Dorsolateral prefrontal cortex (tissue), 120 donors: ENCODE measurements at regions of chr5 and their contacts with region 1.

Region 1: DNA sequence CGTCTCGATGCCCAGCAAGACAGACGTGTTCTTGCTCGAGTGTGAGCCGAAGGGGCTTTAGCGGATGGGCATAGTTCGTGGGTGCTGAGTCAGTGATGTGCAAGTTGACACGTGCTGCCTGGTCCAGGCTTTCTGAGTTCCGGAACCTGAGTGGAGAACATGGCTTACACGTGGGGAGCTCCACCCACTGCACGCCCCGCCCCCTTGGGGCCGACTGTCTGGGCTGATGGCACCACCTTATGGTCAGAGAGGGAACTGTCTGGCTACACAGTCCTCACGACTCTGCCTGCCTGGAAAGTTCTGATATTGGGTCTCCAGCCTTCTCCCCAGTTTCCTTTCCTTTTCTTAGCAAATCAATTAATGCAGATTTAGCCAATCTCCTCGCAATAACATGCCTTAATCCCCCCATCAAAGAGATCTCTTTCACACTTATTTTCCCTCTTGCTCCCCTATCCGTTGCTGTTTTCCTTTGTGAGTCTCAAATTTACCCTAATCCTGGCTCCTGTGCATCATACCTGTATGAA is 3.8 kb upstream of the STC2 start:
- DNase-seq: peak in 9 of 10 donors; percentile 67 to 84 (median 73)
- H3K4me3 ChIP-seq: no peak overlapping the region
- H3K27ac ChIP-seq: no peak overlapping the region
- H3K27me3 ChIP-seq: peaks cover 0 to 47% (median 30%) of the 10 kb centered on the region in 45 donors
- CTCF ChIP-seq: peak; percentile 49 to 95 (median 87)

Region 2: GRCh38 chr5:173412566-173412965 is 80.5 kb after region 1 on chr5:
- intact Hi-C with region 1: loop called in 1 of 2 experiments (anchors 5 kb)
- DNase-seq: peak in 4 of 10 donors; percentile 20 to 58 (median 53)
- H3K4me3 ChIP-seq: no peak overlapping the region
- H3K27ac ChIP-seq: no peak overlapping the region
- H3K27me3 ChIP-seq: no peaks in the 10 kb centered on the region
- CTCF ChIP-seq: peak in 1 of 56 donors; percentile 9

Region 3: GRCh38 chr5:173498286-173498685 is 166.3 kb after region 1 on chr5:
- intact Hi-C with region 1: loop called (anchors 5 to 10 kb)
- DNase-seq: no peak
- H3K4me3 ChIP-seq: no peak overlapping the region
- H3K27ac ChIP-seq: no peak overlapping the region
- H3K27me3 ChIP-seq: peaks cover 0 to 14% (median 0%) of the 10 kb centered on the region in 45 donors
- CTCF ChIP-seq: no peak

Region 4: GRCh38 chr5:173530547-173530946 is 198.5 kb after region 1 on chr5:
- intact Hi-C with region 1: no loop called
- DNase-seq: peak in 1 of 10 donors; percentile 35
- H3K4me3 ChIP-seq: no peak overlapping the region
- H3K27ac ChIP-seq: no peak overlapping the region
- H3K27me3 ChIP-seq: peaks cover 0 to 4% (median 0%) of the 10 kb centered on the region in 45 donors
- CTCF ChIP-seq: peak in 18 of 56 donors; percentile 8 to 50 (median 20)